HepG2 (cell line): ENCODE measurements at regions of chr2 and their contacts with region 1.

Region 1: GRCh38 chr2:111883661-111884591 is at the start of gene ANAPC1:
- DNase-seq: peak; percentile 85
- ATAC-seq: peak; percentile 96
- H3K4me3 ChIP-seq: peak within 1 kb of the TSS; percentile 89 to 97 (median 96)
- H3K27ac ChIP-seq: peak within 1 kb of the TSS; percentile 87
- H3K4me1 ChIP-seq: peaks cover 26% of the 10 kb centered on the region
- H3K27me3 ChIP-seq: no peaks in the 10 kb centered on the region; a peak in 1 of 5 replicates
- CTCF ChIP-seq: peak; percentile 15
- EP300 ChIP-seq: no peak; a peak in 1 of 4 replicates
- POLR2A ChIP-seq: peak; percentile 97 to 99
- RAD21 ChIP-seq: peak; percentile 53
- total RNA-seq, gene ANAPC1: 89.7 and 109 TPM in 2 replicates

Region 2: DNA sequence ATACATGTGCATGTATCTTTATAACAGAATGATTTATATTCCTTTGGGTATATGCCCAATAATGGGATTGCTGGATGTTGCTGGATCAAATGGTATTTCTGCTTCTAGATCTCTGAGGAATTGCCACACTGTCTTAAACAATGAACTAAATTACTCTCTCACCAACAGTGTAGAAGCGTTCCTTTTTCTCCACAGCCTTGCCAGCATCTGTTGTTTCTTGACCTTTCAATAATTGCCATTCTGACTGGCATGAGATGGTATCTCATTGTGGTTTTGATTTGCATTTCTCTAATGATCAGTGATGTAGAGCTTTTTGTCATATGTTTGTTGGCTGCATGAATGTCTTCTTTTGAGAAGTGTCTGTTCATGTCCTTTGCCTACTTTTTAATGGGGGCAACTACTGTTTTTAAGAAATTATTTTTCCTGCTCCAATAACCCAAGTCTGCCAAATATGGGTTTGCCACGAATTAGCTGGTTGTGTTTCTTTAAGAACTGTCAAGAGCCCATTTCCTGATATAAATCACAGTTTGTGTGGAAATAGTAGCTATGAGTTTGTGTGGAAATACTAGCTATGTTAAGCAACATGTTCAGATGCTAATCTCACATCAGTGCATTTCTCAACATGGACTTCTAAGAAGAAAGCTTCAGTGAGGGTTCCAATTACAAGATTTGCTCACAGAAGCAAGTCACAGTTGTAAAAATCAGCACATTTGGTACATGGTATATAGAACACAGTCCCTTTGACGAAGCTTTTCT is 259.3 kb before region 1 on chr2:
- CTCF ChIA-PET with region 1: no interaction called
- POLR2A ChIA-PET with region 1: no interaction called
- in situ Hi-C with region 1: no loop called
- intact Hi-C with region 1: no loop called
- DNase-seq: peak; percentile 21
- ATAC-seq: no peak
- H3K4me3 ChIP-seq: no peak overlapping the region
- H3K27ac ChIP-seq: no peak overlapping the region
- H3K4me1 ChIP-seq: no peaks in the 10 kb centered on the region
- H3K27me3 ChIP-seq: no peaks in the 10 kb centered on the region
- CTCF ChIP-seq: no peak
- EP300 ChIP-seq: no peak
- POLR2A ChIP-seq: no peak
- RAD21 ChIP-seq: no peak

Region 3: DNA sequence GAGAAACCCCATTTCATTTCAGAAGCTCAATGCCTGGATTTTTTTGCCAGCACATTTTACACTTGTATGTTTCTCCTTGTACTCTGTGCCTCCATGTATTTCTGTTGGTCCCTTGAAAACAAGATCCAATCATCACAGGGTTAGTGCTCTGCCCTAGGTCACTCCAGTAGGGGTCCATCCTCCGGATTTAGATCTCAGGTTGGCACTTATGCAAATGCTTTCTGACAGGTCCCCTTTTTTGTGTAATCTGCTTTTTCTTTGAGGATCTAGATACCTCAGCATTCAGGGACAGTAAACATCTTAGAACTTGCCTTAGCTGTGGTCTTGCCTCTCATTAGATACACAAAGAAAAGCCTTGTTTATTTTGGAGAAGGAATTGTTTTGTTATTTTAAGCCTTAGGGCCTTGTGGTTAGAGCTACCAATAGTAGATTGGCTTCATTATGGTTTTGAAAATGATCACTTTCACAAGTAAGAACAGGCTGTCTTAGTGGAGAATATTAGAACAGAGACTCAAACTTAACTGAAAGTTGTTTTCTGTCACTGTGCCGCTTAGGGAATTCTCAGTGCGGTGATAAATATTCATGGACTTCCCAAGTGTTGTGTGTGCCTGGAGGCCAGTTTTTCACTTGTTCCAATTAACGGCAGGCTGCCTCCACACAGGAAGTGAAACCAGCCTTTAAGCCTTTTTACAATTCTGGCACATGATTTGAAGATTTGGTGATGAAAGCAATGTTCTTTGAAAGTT is 22.2 kb after region 1 on chr2:
- CTCF ChIA-PET with region 1: no interaction called
- POLR2A ChIA-PET with region 1: no interaction called
- in situ Hi-C with region 1: no loop called
- intact Hi-C with region 1: no loop called
- DNase-seq: no peak
- ATAC-seq: no peak
- H3K4me3 ChIP-seq: no peak overlapping the region
- H3K27ac ChIP-seq: no peak overlapping the region
- H3K4me1 ChIP-seq: peaks cover 99% of the 10 kb centered on the region
- H3K27me3 ChIP-seq: no peaks in the 10 kb centered on the region
- CTCF ChIP-seq: no peak
- EP300 ChIP-seq: no peak
- POLR2A ChIP-seq: no peak
- RAD21 ChIP-seq: no peak

Region 4: GRCh38 chr2:111919794-111920608 is 36.1 kb after region 1 on chr2:
- CTCF ChIA-PET with region 1: no interaction called
- POLR2A ChIA-PET with region 1: interaction called, 3 read pairs
- in situ Hi-C with region 1: no loop called
- intact Hi-C with region 1: loop called (anchors 5 kb)
- DNase-seq: peak; percentile 94
- ATAC-seq: peak; percentile 96
- H3K4me3 ChIP-seq: peak overlapping the region; percentile 3 to 58 (median 15)
- H3K27ac ChIP-seq: peak overlapping the region; percentile 87
- H3K4me1 ChIP-seq: peaks cover 44% of the 10 kb centered on the region
- H3K27me3 ChIP-seq: no peaks in the 10 kb centered on the region
- CTCF ChIP-seq: peak; percentile 50
- EP300 ChIP-seq: peak in 1 of 2 experiments; percentile 76; a peak in 2 of 4 replicates
- POLR2A ChIP-seq: peak; percentile 84 to 91
- RAD21 ChIP-seq: peak; percentile 37

Region 5: GRCh38 chr2:111946294-111947114 is 62.6 kb after region 1 on chr2:
- CTCF ChIA-PET with region 1: no interaction called
- POLR2A ChIA-PET with region 1: no interaction called
- in situ Hi-C with region 1: no loop called
- intact Hi-C with region 1: no loop called
- DNase-seq: peak; percentile 70
- ATAC-seq: peak; percentile 35
- H3K4me3 ChIP-seq: no peak overlapping the region
- H3K27ac ChIP-seq: peak overlapping the region; percentile 67
- H3K4me1 ChIP-seq: peaks cover 74% of the 10 kb centered on the region
- H3K27me3 ChIP-seq: no peaks in the 10 kb centered on the region
- CTCF ChIP-seq: no peak
- EP300 ChIP-seq: 0 out of 4 replicates have a peak, but pooled peaks of 1 of the 2 experiments have one; percentile 4
- POLR2A ChIP-seq: no peak
- RAD21 ChIP-seq: no peak

Region 6: GRCh38 chr2:112048887-112049286 is 165.0 kb after region 1 on chr2:
- CTCF ChIA-PET with region 1: interaction called, 50 read pairs
- POLR2A ChIA-PET with region 1: interaction called, 27 read pairs
- in situ Hi-C with region 1: no loop called
- intact Hi-C with region 1: loop called (anchors 1 kb)
- DNase-seq: peak; percentile 71
- ATAC-seq: no peak
- H3K4me3 ChIP-seq: peak overlapping the region in 1 of 3 experiments; percentile 49; a peak in 1 of 6 replicates
- H3K27ac ChIP-seq: no peak overlapping the region
- H3K4me1 ChIP-seq: peaks cover 39% of the 10 kb centered on the region
- H3K27me3 ChIP-seq: no peaks in the 10 kb centered on the region; a peak in 1 of 5 replicates
- CTCF ChIP-seq: peak; percentile 70
- EP300 ChIP-seq: no peak
- POLR2A ChIP-seq: no peak
- RAD21 ChIP-seq: no peak

Region 7: GRCh38 chr2:112054847-112055729 is 171.2 kb after region 1 on chr2 and contains the start of gene TMEM87B:
- CTCF ChIA-PET with region 1: no interaction called
- POLR2A ChIA-PET with region 1: interaction called, 27 read pairs
- in situ Hi-C with region 1: no loop called
- intact Hi-C with region 1: no loop called
- DNase-seq: peak; percentile 91
- ATAC-seq: peak; percentile 80
- H3K4me3 ChIP-seq: peak within 1 kb of the TSS; percentile 92 to 97 (median 95)
- H3K27ac ChIP-seq: peak within 1 kb of the TSS; percentile 95
- H3K4me1 ChIP-seq: peaks cover 38% of the 10 kb centered on the region
- H3K27me3 ChIP-seq: no peaks in the 10 kb centered on the region; a peak in 1 of 5 replicates
- CTCF ChIP-seq: peak; percentile 28; the same call in 1 of the 2 replicates
- EP300 ChIP-seq: no peak
- POLR2A ChIP-seq: peak; percentile 74 to 93
- RAD21 ChIP-seq: peak; percentile 60; the same call in 1 of the 2 replicates
- total RNA-seq, gene TMEM87B: 9.9 and 15.1 TPM in 2 replicates